MCF 10A (cell line): ENCODE measurements at regions of chr9 and their contacts with region 1.

Region 1: GRCh38 chr9:87812375-87813118 is 70.1 kb upstream of the SPATA31E1 start:
- DNase-seq: peak; percentile 47
- H3K4me3 Mint-ChIP-seq: no peak overlapping the region
- H3K27ac Mint-ChIP-seq: no peak overlapping the region
- H3K4me1 Mint-ChIP-seq: no peaks in the 10 kb centered on the region
- H3K27me3 Mint-ChIP-seq: no peaks in the 10 kb centered on the region
- CTCF ChIP-seq: peak; percentile 98

Region 2: GRCh38 chr9:87336914-87337333 is 475.6 kb before region 1 on chr9:
- CTCF ChIA-PET with region 1: interaction called, 5 read pairs
- POLR2A ChIA-PET with region 1: no interaction called
- intact Hi-C with region 1: loop called (anchors 1 kb)
- DNase-seq: peak; percentile 83
- H3K4me3 Mint-ChIP-seq: peak overlapping the region; percentile 80
- H3K27ac Mint-ChIP-seq: peak overlapping the region; percentile 61
- H3K4me1 Mint-ChIP-seq: peaks cover 19% of the 10 kb centered on the region
- H3K27me3 Mint-ChIP-seq: no peaks in the 10 kb centered on the region
- CTCF ChIP-seq: peak; percentile 73

Region 3: DNA sequence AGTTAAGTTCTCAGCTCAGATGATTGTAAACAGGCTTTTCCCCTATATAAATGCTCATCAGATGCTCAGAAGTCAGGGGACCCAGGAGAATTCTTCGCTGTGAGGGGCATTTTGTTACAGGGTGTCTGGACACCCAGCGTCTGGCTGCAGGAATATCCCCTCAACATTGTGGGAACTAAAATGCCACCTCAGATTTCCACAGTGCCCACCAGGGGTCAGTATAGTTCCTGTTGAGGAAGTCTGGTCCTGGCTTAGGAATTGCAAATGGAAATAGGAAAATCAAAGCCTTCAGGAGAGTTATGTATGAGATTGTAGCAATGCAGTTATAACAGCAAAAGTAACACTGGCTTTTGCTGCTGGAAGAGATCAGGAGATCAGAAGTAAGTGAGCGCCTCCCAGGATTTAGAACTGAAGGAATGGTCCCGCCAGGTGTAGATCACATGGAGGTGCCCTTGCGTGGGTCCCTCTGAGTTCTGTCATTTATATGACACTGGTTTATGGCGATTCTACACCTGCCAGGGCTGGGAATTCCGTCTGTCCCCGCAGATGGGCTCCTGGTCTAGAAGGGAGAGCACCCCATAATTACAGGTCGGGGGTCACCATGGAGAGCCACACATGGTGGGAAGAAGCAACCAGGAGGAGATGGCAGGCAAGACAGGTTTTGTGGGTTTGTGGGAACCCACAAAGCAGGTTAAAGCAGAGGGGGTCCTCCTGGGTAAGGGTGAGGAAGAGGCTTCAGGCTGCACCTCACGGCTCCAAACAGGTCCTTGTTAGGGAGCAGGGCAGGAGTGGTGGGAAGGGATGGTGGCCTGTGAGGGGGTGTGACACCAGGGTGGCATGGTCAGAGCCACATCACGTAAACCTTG is 133.7 kb before region 1 on chr9:
- CTCF ChIA-PET with region 1: interaction called, 100 read pairs
- POLR2A ChIA-PET with region 1: interaction called, 7 read pairs
- intact Hi-C with region 1: loop called (anchors 1 kb)
- DNase-seq: peak; percentile 78
- H3K4me3 Mint-ChIP-seq: no peak overlapping the region
- H3K27ac Mint-ChIP-seq: no peak overlapping the region
- H3K4me1 Mint-ChIP-seq: no peaks in the 10 kb centered on the region
- H3K27me3 Mint-ChIP-seq: no peaks in the 10 kb centered on the region
- CTCF ChIP-seq: peak; percentile 65

Region 4: DNA sequence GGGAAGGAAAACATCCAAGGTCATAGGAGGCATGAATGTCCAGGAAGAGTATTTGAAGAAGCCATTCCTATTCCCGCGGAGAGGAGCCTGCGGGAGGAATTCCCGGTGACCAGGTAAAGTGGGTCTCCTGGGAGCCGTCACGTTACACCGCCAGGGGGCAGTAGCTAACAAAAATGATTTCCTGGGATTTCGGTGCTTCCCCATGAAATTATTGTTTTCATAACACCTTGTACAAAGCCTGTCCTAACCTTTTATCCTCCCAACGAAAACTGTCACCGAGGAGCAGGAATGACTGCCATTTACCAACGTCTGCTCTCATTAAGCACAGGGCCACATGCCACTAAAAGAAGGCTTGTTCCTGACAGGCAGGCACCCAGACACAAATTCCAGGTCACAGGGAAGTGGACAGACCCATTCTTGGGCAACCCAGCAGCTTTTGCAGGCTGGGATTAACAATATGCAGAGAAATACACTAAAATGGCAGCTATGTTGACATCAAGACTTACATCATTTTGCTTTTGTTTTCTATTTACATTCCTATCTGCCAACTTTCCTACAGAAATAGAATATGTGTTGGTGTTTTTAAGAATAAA is 127.8 kb before region 1 on chr9:
- CTCF ChIA-PET with region 1: interaction called, 100 read pairs
- POLR2A ChIA-PET with region 1: interaction called, 7 read pairs
- intact Hi-C with region 1: loop called (anchors 1 kb)
- DNase-seq: peak; percentile 70
- H3K4me3 Mint-ChIP-seq: no peak overlapping the region
- H3K27ac Mint-ChIP-seq: no peak overlapping the region
- H3K4me1 Mint-ChIP-seq: peaks cover 6% of the 10 kb centered on the region
- H3K27me3 Mint-ChIP-seq: no peaks in the 10 kb centered on the region
- CTCF ChIP-seq: peak; percentile 67

Region 5: GRCh38 chr9:87693986-87694755 is 118.4 kb before region 1 on chr9:
- CTCF ChIA-PET with region 1: interaction called, 100 read pairs
- POLR2A ChIA-PET with region 1: no interaction called
- intact Hi-C with region 1: no loop called
- DNase-seq: no peak
- H3K4me3 Mint-ChIP-seq: no peak overlapping the region
- H3K27ac Mint-ChIP-seq: no peak overlapping the region
- H3K4me1 Mint-ChIP-seq: no peaks in the 10 kb centered on the region
- H3K27me3 Mint-ChIP-seq: no peaks in the 10 kb centered on the region
- CTCF ChIP-seq: no peak

Region 6: DNA sequence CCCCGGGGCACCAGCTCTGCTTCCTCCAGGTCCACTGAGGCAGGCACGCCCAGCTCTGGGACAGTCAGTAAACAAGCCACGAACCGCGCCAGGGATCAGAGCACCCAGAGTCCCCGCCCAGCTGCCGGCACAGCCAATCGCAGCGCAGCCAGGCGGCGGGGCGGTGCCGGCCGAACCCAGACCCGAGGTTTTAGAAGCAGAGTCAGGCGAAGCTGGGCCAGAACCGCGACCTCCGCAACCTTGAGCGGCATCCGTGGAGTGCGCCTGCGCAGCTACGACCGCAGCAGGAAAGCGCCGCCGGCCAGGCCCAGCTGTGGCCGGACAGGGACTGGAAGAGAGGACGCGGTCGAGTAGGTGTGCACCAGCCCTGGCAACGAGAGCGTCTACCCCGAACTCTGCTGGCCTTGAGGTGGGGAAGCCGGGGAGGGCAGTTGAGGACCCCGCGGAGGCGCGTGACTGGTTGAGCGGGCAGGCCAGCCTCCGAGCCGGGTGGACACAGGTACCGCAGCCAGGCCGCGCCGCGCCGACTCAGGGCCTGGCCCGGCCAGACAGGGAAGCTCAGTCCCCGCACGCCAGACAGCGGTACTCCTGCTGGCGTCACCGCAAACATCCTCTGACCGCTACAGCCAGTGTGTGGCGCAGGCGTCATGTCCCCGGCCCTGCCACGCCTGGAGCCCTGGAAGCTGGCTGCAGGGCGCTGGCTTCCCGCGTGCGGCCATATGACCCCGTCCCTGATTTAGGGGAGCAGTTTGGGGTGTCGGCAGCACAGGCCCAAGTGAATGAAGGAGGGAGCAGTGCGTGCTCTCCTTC is 86.4 kb before region 1 on chr9 and contains the start of gene CTSL:
- CTCF ChIA-PET with region 1: interaction called, 10 read pairs
- POLR2A ChIA-PET with region 1: interaction called, 4 read pairs
- intact Hi-C with region 1: loop called (anchors 1 kb)
- DNase-seq: peak; percentile 78
- H3K4me3 Mint-ChIP-seq: peak within 1 kb of the TSS; percentile 98
- H3K27ac Mint-ChIP-seq: peak within 1 kb of the TSS; percentile 99
- H3K4me1 Mint-ChIP-seq: peaks cover 6% of the 10 kb centered on the region
- H3K27me3 Mint-ChIP-seq: no peaks in the 10 kb centered on the region
- CTCF ChIP-seq: peak; percentile 26
- total RNA-seq, gene CTSL: 84.2 and 141 TPM in 2 replicates

Region 7: DNA sequence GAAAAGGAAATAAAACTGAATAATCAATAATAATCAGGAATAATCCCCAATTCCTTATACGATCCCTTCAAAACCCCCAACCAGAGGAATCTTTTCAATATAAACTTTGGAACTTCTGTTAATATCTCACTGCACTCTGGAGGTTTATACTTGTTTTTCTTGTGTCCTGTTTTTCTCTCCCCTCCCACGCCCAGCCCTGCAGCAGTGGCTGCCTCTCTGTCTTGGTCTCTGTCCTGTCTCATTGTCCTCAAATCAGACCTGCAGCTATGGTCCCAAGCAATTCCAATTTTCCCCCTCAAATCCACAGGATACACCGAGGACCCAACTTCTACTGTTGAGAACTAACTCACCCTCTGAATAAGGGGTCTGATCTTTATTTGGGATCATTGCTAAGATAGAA is 42.9 kb before region 1 on chr9:
- CTCF ChIA-PET with region 1: no interaction called
- POLR2A ChIA-PET with region 1: no interaction called
- intact Hi-C with region 1: no loop called
- DNase-seq: no peak
- H3K4me3 Mint-ChIP-seq: no peak overlapping the region
- H3K27ac Mint-ChIP-seq: no peak overlapping the region
- H3K4me1 Mint-ChIP-seq: no peaks in the 10 kb centered on the region
- H3K27me3 Mint-ChIP-seq: peaks cover 25% of the 10 kb centered on the region
- CTCF ChIP-seq: no peak

Region 8: GRCh38 chr9:87792831-87793288 is 19.7 kb before region 1 on chr9:
- CTCF ChIA-PET with region 1: interaction called, 35 read pairs
- POLR2A ChIA-PET with region 1: interaction called, 4 read pairs
- intact Hi-C with region 1: no loop called
- DNase-seq: peak; percentile 96
- H3K4me3 Mint-ChIP-seq: peak overlapping the region; percentile 49
- H3K27ac Mint-ChIP-seq: peak overlapping the region; percentile 77
- H3K4me1 Mint-ChIP-seq: peaks cover 22% of the 10 kb centered on the region
- H3K27me3 Mint-ChIP-seq: no peaks in the 10 kb centered on the region
- CTCF ChIP-seq: peak; percentile 20